Activated naive CD4-positive, alpha-beta T cell treated with anti-CD3 and anti-CD28 coated beads, Interleukin-2, amount 10 ng/mL, durations not matched to agents 7 days and 5 days (primary cell): ENCODE measurements at regions of chr14 and their contacts with region 1.

Region 1: DNA sequence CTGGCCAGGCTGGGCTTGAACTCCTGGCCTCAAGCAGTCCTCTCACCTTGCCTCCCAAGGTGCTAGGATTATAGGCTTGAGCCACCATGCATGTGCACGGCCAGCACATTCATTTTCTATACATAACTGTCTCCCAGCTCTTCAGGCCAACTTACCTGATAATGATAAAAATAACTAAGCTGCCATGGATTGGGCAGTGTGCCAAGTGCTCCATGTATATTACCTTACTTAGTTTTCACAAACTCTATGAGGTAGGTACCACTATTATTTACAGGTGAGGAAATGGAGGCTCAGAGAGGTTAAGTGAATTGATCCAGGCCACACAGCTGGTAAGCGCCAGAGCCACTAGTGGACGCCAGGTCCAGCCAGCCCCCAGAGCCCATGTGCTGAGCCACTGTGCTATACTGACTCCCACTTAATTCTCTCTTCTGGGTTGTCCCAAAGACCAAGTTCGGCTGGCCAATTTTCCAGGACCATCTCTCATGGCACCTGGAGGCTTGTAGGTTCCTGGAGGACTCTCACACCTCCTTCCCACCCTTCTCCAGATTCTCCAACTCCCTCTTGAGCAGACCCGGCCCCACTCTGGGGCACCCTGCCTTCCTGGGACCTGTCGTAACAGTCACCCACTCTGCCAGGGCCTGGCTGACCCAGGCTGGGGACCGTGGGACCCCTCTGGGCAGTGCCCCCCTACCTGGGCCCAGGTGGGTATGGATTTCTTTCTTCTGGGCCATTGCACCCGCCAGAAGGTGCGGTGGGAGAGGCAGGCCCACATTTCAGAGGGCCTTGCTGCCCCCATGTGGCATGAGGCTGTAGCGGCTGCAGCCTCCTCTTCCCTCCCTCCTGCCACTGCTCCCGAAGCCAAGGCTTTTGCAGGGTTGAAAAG is 30.2 kb upstream of the CIPC start:
- DNase-seq: peak; percentile 74
- H3K4me3 Mint-ChIP-seq: no peak overlapping the region
- H3K27ac Mint-ChIP-seq: no peak overlapping the region
- H3K4me1 Mint-ChIP-seq: no peaks in the 10 kb centered on the region
- H3K27me3 Mint-ChIP-seq: peaks cover 54% of the 10 kb centered on the region

Region 2: GRCh38 chr14:76710056-76711010 is 357.5 kb before region 1 on chr14:
- CTCF ChIA-PET with region 1: interaction called, 22 read pairs
- DNase-seq: peak; percentile 44
- H3K4me3 Mint-ChIP-seq: no peak overlapping the region
- H3K27ac Mint-ChIP-seq: peak overlapping the region; percentile 58
- H3K4me1 Mint-ChIP-seq: no peaks in the 10 kb centered on the region
- H3K27me3 Mint-ChIP-seq: peaks cover 14% of the 10 kb centered on the region

Region 3: DNA sequence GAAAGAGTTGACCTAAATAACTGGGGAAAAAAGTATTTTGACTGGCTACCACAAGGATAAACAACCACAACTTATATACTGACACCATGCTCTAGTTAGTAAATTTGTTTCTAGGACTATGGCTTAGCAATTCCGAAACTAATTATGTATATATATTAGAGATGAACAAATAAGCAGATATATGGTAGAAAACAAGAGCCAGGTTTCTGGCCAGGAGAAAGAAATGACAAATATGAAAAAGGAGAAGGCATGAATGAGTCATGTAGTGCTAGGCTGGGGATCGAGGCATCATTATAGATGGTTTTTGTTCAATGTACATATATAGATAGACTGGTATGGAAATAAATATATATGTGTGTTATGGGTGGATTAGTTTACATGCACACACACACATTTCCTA is 247.2 kb before region 1 on chr14:
- CTCF ChIA-PET with region 1: no interaction called
- DNase-seq: no peak
- H3K4me3 Mint-ChIP-seq: no peak overlapping the region
- H3K27ac Mint-ChIP-seq: no peak overlapping the region
- H3K4me1 Mint-ChIP-seq: no peaks in the 10 kb centered on the region
- H3K27me3 Mint-ChIP-seq: peaks cover 7% of the 10 kb centered on the region

Region 4: GRCh38 chr14:76836029-76836630 is 231.7 kb before region 1 on chr14:
- CTCF ChIA-PET with region 1: no interaction called
- DNase-seq: no peak
- H3K4me3 Mint-ChIP-seq: no peak overlapping the region
- H3K27ac Mint-ChIP-seq: peak overlapping the region; percentile 10
- H3K4me1 Mint-ChIP-seq: no peaks in the 10 kb centered on the region
- H3K27me3 Mint-ChIP-seq: peaks cover 44% of the 10 kb centered on the region

Region 5: GRCh38 chr14:76904740-76905438 is 163.0 kb before region 1 on chr14:
- CTCF ChIA-PET with region 1: interaction called, 273 read pairs
- DNase-seq: peak; percentile 67
- H3K4me3 Mint-ChIP-seq: no peak overlapping the region
- H3K27ac Mint-ChIP-seq: peak overlapping the region; percentile 53
- H3K4me1 Mint-ChIP-seq: peaks cover 42% of the 10 kb centered on the region
- H3K27me3 Mint-ChIP-seq: peaks cover 33% of the 10 kb centered on the region

Region 6: DNA sequence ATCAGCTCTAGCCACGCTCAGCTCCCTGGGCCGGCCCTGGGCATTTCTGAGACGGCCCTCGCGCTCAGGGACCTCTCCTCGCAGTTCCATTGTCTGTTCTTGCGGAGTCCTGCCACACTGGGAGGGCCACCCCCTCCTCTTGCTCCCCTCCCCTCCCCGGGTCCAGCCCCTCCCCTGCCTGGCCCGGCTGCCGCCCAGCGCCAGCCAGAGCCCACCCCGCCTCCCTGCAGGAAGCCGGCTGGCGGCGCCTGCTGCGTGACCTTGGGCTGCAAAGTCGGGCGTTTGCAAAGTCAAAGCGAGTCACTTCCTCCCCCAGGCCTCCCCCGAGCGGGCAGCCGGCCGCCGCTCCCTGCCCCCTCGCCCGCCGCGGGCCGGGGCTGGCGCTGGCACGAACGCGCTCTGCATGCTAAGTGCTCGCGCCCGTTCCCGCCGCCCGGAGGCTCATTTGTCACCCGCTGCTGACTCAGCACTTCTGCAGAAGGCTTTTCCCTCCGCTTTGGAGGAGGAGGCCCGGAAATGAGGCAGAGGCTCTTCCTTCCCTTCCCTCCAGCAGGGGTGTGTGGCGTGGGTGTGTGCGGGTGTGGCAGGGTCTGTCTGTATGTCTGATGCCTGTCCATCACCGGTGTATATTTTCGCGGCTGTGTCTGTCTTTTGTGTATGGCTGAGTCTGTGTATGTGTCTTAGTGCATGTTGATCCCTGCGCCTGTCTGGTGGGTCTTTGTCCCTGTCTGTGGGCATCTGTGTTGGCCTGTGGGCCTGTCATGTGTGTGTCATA is 111.4 kb before region 1 on chr14:
- CTCF ChIA-PET with region 1: interaction called, 14 read pairs
- DNase-seq: peak; percentile 92
- H3K4me3 Mint-ChIP-seq: peak overlapping the region; percentile 81
- H3K27ac Mint-ChIP-seq: peak overlapping the region; percentile 98
- H3K4me1 Mint-ChIP-seq: peaks cover 88% of the 10 kb centered on the region
- H3K27me3 Mint-ChIP-seq: no peaks in the 10 kb centered on the region

Region 7: DNA sequence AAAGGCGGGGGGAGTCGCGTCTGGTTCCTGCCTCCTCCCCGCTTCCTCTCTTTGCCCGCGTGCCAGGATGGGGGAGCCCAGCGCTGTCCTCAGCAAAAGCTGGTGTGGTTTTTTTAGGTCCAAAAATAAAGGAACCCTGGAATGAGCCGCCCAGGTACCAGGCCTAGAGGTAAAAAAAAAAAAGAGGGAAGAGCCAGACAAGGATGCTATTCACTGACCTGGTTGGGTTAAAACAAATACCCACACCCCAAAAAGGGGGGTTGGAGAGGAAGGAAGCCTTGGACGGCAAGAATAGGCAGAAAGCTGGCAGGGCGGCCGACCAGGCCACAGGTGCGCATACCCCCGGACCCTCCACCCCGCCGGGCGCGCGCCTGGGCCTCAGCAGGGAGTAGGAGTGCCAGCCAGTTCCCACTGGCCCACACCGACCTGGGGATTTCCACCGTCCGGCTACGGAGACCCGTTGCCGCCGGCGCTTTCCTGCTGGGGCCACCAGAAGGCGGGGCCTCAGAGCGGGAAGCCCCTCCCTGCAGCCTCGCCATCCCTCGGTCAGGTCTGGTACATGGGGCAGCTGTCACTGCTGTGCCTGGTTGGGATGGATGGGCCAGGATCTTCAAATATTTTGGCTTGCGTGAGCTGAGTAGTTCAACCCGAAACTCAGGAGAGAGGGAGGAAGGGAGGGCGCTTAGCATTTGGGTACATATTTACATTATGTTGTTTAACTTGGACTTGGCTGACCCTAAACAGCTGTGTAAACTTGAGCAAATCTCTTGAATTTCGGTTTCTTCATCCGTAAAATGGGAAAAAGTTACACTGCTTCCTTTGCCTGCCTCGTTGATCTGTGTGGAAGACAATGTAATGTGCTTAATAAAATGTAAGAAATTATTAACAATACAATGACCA is 34.0 kb before region 1 on chr14:
- CTCF ChIA-PET with region 1: no interaction called
- DNase-seq: peak; percentile 84
- H3K4me3 Mint-ChIP-seq: peak overlapping the region; percentile 86
- H3K27ac Mint-ChIP-seq: peak overlapping the region; percentile 92
- H3K4me1 Mint-ChIP-seq: peaks cover 91% of the 10 kb centered on the region
- H3K27me3 Mint-ChIP-seq: no peaks in the 10 kb centered on the region

Region 8: DNA sequence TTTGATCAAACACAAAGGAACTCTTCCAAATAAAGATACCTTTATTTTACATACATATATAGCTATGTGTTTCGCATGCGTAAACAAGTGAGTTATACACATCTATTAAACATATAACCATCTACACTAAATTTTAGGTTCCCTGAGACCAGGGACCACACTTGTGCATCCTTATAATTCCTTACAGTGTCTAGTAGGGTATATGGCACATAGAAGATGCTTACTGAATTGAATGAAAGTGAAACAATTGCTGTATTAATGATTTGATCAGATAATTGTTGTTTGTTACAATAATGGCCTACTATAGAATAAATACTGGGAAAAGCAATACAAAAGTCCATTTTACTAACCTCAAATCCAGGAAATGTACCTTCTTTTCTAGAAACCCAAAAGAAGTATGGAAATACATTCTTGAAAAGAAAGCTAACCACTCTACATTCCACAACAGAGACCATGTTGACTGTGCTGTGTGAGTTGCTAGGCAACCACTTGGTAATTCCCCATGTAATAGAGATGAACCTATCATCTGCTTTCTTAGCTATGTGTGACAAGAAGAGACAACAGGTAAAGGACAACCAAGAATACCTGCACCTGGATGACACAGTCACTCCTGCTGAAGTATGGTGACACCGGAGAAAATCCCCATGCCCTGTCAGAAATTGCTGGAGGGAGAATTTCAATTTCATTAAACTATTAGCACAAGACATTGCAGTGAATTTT is 18.3 kb after region 1 on chr14:
- CTCF ChIA-PET with region 1: interaction called, 45 read pairs
- DNase-seq: no peak
- H3K4me3 Mint-ChIP-seq: no peak overlapping the region
- H3K27ac Mint-ChIP-seq: no peak overlapping the region
- H3K4me1 Mint-ChIP-seq: peaks cover 13% of the 10 kb centered on the region
- H3K27me3 Mint-ChIP-seq: peaks cover 32% of the 10 kb centered on the region

Region 9: DNA sequence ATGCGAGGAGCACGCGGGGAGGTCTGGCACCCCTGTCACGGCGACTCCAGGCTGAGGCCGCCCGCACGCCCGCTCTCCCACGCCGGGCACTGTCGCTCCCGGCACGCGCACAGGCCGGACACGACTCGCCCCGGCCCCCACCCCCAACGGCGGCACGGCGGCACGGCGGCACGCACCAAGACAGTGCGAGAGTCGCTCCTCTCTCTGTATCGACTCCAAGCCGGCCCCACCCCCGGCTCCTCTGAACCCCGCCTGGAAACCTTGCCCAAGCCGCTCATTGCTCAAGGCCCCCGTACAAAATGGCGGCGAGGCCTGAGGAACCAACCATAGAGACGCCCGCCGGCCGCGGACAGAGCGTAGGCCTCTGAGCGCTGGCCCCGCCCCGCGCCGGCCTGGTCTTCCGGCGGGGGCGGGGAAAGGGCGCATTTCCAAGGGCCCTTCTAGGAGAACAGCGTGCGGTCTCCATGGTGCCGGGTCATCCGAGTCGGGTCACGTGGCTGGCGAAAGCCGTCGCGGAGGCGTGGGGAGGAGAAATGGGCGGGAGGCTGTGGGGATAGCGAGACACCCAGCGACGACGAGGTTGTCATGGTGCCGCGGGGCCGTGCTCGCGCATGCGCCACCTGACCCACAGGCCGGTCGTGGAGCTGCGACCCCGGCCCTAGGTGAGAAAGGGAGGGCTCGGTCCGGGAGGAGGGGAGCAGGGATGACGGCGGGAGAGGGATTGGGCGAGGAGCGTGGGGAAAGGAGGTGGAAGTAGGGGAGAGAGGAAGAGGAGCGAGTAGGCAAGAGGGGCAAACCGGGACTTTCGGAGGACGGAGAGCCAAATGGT is 30.0 kb after region 1 on chr14 and contains the start of gene CIPC:
- CTCF ChIA-PET with region 1: interaction called, 28 read pairs
- DNase-seq: peak; percentile 100
- H3K4me3 Mint-ChIP-seq: peak within 1 kb of the TSS; percentile 99
- H3K27ac Mint-ChIP-seq: peak within 1 kb of the TSS; percentile 97
- H3K4me1 Mint-ChIP-seq: peaks cover 34% of the 10 kb centered on the region
- H3K27me3 Mint-ChIP-seq: peaks cover 6% of the 10 kb centered on the region